Endothelial cell of umbilical vein (primary cell): ENCODE measurements at regions of chr5 and their contacts with region 1.

Region 1: DNA sequence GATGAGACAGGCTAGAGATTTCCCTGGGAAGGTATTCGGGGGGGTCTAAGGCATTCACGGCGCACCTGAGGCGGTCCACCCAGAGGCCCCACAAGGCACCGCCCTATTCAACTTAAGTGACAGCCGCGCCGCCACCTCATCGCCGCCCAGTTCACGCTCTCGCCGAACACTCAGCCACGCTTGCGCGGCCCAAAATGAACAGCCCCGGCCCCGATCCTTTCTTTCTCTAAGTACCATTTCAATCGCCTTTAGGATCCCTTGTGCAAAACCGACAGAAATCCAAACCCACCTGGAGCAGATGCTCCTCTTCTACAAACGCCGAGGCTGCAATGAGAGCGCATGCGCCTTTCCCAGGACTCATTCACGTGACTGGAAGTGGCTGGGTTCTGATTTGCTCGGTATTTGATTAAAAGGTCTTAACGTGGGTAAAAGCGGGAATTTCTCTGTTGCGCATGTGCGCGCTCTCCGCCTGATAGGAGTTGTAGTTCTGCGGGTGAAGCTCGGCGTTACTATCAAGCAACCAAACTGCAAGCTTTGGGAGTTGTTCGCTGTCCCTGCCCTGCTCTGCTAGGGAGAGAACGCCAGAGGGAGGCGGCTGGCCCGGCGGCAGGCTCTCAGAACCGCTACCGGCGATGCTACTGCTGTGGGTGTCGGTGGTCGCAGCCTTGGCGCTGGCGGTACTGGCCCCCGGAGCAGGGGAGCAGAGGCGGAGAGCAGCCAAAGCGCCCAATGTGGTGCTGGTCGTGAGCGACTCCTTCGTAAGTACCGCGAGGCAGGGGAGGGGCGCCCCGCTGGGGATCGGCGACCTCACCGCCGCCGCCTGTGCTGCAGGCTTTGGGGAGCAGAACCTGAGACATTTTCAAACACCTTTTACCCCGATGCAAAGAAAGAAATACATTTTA is at the starts of genes ARSK and SKIC3:
- DNase-seq: peak; percentile 99
- H3K4me3 ChIP-seq: peak within 1 kb of the TSS; percentile 57 to 90 (median 86)
- H3K27ac ChIP-seq: peak within 1 kb of the TSS; percentile 31
- H3K4me1 ChIP-seq: peaks cover 15% of the 10 kb centered on the region
- H3K27me3 ChIP-seq: no peaks in the 10 kb centered on the region
- CTCF ChIP-seq: peak; percentile 10 to 45
- POLR2A ChIP-seq: peak; percentile 64
- total RNA-seq, gene ARSK: 4.9 and 5.3 TPM in 2 replicates
- total RNA-seq, gene SKIC3: 92.6 and 100 TPM in 2 replicates

Region 2: DNA sequence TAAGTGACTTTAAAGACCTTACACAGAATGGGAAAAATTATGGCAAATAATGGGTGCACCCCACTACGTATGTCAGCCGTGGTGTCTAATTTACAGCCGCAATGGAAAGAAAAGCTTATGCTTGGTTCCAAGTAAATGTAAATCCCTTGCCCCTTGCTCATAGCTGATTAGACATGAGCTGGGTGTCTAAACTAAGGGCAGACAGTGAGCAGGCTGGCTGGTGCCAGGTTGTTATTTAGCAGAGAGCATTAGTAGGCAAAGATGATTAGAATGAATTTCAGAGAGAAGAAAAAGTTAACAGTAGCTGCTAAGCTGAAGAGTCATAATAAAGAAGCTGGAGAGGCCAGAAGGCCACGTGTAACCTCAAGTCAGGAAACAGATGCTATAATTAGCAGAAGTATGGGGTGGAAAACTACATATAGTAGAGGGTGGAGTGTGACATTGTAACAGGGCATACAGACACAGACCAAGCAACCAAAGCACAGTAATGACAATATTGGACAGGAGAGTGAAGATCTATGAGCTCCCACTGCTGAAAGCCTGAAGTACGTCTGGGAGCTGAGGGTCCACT is 527.7 kb before region 1 on chr5:
- CTCF ChIA-PET with region 1: no interaction called
- POLR2A ChIA-PET with region 1: interaction called, 3 read pairs
- dilution Hi-C with region 1: no loop called
- intact Hi-C with region 1: loop called (anchors 1 kb)
- DNase-seq: peak; percentile 44
- H3K4me3 ChIP-seq: no peak overlapping the region
- H3K27ac ChIP-seq: no peak overlapping the region
- H3K4me1 ChIP-seq: peaks cover 33% of the 10 kb centered on the region
- H3K27me3 ChIP-seq: no peaks in the 10 kb centered on the region
- CTCF ChIP-seq: no peak
- POLR2A ChIP-seq: no peak

Region 3: DNA sequence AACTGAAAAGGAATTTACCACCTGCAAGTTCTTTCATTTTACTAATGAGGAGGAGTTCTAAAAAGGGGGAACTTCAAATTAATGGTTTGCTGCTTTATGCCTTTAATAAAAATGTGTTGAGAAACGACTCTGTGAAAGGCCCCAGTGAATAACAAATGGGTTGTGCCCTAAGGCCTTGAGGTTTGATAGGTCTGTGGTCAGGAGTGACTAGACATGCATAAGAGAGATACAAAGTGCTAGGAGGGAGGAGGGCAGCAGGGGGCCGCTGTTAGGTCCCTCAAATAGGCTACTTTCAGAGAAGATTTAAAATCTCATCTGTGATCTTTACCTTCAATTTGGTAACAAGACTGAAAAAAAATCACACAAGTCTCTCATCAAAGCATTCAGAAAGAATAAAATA is 105.4 kb before region 1 on chr5:
- CTCF ChIA-PET with region 1: no interaction called
- POLR2A ChIA-PET with region 1: no interaction called
- dilution Hi-C with region 1: no loop called
- intact Hi-C with region 1: no loop called
- DNase-seq: no peak
- H3K4me3 ChIP-seq: no peak overlapping the region
- H3K27ac ChIP-seq: no peak overlapping the region
- H3K4me1 ChIP-seq: no peaks in the 10 kb centered on the region
- H3K27me3 ChIP-seq: peaks cover 0 to 6% of the 10 kb centered on the region in 2 experiments
- CTCF ChIP-seq: no peak
- POLR2A ChIP-seq: no peak

Region 4: DNA sequence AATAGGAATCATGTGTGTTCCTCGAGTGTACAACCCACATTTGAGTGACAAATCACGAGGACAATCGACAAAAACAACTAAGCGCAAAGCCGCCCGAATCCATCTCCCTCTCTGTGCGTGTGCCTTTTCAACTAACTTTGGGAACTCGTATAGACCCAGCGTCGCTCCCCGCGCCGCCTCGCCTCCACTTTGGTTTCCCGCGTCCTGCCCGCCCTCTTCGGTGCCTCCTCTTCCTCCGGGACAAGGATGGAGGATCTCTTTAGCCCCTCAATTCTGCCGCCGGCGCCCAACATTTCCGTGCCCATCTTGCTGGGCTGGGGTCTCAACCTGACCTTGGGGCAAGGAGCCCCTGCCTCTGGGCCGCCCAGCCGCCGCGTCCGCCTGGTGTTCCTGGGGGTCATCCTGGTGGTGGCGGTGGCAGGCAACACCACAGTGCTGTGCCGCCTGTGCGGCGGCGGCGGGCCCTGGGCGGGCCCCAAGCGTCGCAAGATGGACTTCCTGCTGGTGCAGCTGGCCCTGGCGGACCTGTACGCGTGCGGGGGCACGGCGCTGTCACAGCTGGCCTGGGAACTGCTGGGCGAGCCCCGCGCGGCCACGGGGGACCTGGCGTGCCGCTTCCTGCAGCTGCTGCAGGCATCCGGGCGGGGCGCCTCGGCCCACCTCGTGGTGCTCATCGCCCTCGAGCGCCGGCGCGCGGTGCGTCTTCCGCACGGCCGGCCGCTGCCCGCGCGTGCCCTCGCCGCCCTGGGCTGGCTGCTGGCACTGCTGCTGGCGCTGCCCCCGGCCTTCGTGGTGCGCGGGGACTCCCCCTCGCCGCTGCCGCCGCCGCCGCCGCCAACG is 65.4 kb after region 1 on chr5 and contains the start of gene GPR150:
- CTCF ChIA-PET with region 1: interaction called, 4 read pairs
- POLR2A ChIA-PET with region 1: no interaction called
- dilution Hi-C with region 1: no loop called
- intact Hi-C with region 1: loop called (anchors 1 kb)
- DNase-seq: peak; percentile 39
- H3K4me3 ChIP-seq: peak within 1 kb of the TSS; percentile 18 to 54 (median 53)
- H3K27ac ChIP-seq: peak within 1 kb of the TSS; percentile 44
- H3K4me1 ChIP-seq: peaks cover 23% of the 10 kb centered on the region
- H3K27me3 ChIP-seq: no peaks in the 10 kb centered on the region
- CTCF ChIP-seq: no peak
- POLR2A ChIP-seq: peak; percentile 31
- total RNA-seq, gene GPR150: 0.31 and 0.35 TPM in 2 replicates

Region 5: GRCh38 chr5:95686651-95687050 is 131.8 kb after region 1 on chr5:
- CTCF ChIA-PET with region 1: no interaction called
- POLR2A ChIA-PET with region 1: no interaction called
- dilution Hi-C with region 1: no loop called
- intact Hi-C with region 1: no loop called
- DNase-seq: no peak
- H3K4me3 ChIP-seq: no peak overlapping the region
- H3K27ac ChIP-seq: no peak overlapping the region
- H3K4me1 ChIP-seq: peaks cover 4% of the 10 kb centered on the region
- H3K27me3 ChIP-seq: no peaks in the 10 kb centered on the region
- CTCF ChIP-seq: no peak
- POLR2A ChIP-seq: no peak

Region 6: GRCh38 chr5:96146675-96147074 is 591.8 kb after region 1 on chr5:
- CTCF ChIA-PET with region 1: no interaction called
- POLR2A ChIA-PET with region 1: no interaction called
- dilution Hi-C with region 1: no loop called
- intact Hi-C with region 1: no loop called
- DNase-seq: peak; percentile 6
- H3K4me3 ChIP-seq: no peak overlapping the region
- H3K27ac ChIP-seq: no peak overlapping the region
- H3K4me1 ChIP-seq: no peaks in the 10 kb centered on the region
- H3K27me3 ChIP-seq: no peaks in the 10 kb centered on the region
- CTCF ChIP-seq: no peak
- POLR2A ChIP-seq: no peak